ENCODE measurements at regions of chr1 and their contacts with region 1.

Region 1: DNA sequence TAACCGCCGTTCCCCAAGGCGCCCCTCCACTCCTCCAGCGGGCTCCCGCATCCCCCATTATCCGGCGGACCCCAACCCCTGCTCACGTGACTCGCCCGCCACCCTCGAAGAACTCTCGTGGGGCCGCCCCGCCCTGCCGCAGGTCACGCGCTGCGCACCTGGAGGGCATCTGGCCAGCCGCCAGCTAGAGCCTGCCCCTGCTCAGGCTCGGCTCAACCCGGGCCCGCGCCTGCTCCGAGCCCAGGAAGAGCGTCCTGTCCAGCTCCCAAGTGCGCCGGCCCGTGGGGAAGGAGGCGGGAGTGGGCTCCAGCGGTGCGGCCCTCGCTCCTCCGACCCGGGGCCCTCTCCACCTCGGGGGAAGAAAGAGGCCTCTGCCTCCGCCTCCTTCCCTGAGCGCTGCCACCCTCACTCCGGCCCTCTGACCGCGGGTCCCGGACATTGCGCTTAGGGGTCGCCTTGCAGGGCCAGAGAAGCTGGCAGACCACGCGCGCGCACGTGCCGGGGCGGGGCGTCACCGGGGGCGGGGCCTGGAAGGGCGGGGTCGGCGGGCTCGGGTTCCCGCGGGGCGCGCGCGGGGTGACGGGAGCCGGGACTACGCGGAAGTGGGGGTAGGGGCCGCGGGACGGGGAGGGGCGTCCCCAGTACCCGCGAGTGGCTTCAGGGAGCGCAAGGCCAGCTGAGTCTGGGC is 28.4 kb downstream of the HMGN2 start:
- DNase-seq: peak; percentile 85
- H3K4me3 ChIP-seq: peak overlapping the region; percentile 65
- H3K27ac ChIP-seq: peak overlapping the region; percentile 77
- H3K4me1 ChIP-seq: peaks cover 15% of the 10 kb centered on the region
- H3K27me3 ChIP-seq: no peaks in the 10 kb centered on the region
- CTCF ChIP-seq: no peak

Region 2: GRCh38 chr1:26345718-26346549 is 154.7 kb before region 1 on chr1:
- CTCF ChIA-PET with region 1: no interaction called
- POLR2A ChIA-PET with region 1: no interaction called
- intact Hi-C with region 1: no loop called
- DNase-seq: no peak
- H3K4me3 ChIP-seq: no peak overlapping the region
- H3K27ac ChIP-seq: no peak overlapping the region
- H3K4me1 ChIP-seq: no peaks in the 10 kb centered on the region
- H3K27me3 ChIP-seq: no peaks in the 10 kb centered on the region
- CTCF ChIP-seq: no peak

Region 3: GRCh38 chr1:26787706-26788514 is 287.3 kb after region 1 on chr1 and contains the start of gene PIGV:
- CTCF ChIA-PET with region 1: interaction called, 3 read pairs
- POLR2A ChIA-PET with region 1: no interaction called
- intact Hi-C with region 1: loop called (anchors 5 kb)
- DNase-seq: peak; percentile 94
- H3K4me3 ChIP-seq: peak within 1 kb of the TSS; percentile 63
- H3K27ac ChIP-seq: peak within 1 kb of the TSS; percentile 97
- H3K4me1 ChIP-seq: peaks cover 29% of the 10 kb centered on the region
- H3K27me3 ChIP-seq: no peaks in the 10 kb centered on the region
- CTCF ChIP-seq: no peak
- total RNA-seq, gene PIGV: 4.9 and 9.1 TPM in 2 replicates

Region 4: GRCh38 chr1:26900001-26900814 is 399.6 kb after region 1 on chr1 and contains the start of gene GPATCH3:
- CTCF ChIA-PET with region 1: no interaction called
- POLR2A ChIA-PET with region 1: no interaction called
- intact Hi-C with region 1: no loop called
- DNase-seq: peak; percentile 95
- H3K4me3 ChIP-seq: peak within 1 kb of the TSS; percentile 78
- H3K27ac ChIP-seq: peak within 1 kb of the TSS; percentile 73
- H3K4me1 ChIP-seq: peaks cover 7% of the 10 kb centered on the region
- H3K27me3 ChIP-seq: no peaks in the 10 kb centered on the region
- CTCF ChIP-seq: no peak
- total RNA-seq, gene GPATCH3: 17.5 and 19.5 TPM in 2 replicates

Measured in A673 (cell line).